ENCODE measurements at regions of chr2 and their contacts with region 1.

Region 1: GRCh38 chr2:114175507-114175906 is 266.9 kb upstream of the DPP10 start:
- DNase-seq: no peak
- H3K4me3 ChIP-seq: no peak overlapping the region
- CTCF ChIP-seq: no peak
- POLR2A ChIP-seq: no peak

Region 2: DNA sequence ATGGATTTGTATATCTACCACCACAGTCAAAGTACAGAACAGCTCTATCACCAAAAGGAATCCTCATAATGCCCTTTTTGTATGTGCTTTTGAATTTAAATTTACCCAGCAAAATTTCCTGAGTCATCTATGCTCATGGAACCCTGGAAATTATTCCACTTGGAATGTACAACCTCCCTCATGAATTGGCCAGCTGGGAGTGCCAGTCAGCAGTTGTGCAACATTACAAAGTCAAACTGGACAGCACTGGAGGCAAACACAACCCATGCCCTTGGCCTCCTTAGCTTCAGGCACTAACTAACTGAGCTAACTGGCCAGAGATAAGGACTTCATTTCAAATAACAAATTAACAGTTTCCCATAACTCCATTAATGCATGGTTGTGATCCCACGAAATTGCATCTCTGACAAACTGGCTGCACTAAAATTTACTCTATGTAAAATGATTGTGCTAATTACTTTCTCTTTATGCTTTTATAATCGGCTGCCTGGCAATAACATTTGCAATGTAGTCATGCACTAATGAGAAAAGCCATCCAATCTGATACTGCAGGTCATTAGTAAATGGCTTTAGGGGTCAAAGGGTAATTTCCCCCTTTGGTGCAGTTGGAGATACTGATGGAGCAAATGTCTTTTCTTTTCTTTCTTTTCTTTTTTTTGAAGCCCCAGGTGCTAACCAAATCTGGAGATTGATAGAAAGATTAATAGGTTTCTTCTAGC is 15.1 kb before region 1 on chr2:
- intact Hi-C with region 1: loop called (anchors 2 kb)
- DNase-seq: no peak
- H3K4me3 ChIP-seq: no peak overlapping the region
- CTCF ChIP-seq: no peak
- POLR2A ChIP-seq: no peak